ENCODE measurements at regions of chr9 and their contacts with region 1.

Region 1: DNA sequence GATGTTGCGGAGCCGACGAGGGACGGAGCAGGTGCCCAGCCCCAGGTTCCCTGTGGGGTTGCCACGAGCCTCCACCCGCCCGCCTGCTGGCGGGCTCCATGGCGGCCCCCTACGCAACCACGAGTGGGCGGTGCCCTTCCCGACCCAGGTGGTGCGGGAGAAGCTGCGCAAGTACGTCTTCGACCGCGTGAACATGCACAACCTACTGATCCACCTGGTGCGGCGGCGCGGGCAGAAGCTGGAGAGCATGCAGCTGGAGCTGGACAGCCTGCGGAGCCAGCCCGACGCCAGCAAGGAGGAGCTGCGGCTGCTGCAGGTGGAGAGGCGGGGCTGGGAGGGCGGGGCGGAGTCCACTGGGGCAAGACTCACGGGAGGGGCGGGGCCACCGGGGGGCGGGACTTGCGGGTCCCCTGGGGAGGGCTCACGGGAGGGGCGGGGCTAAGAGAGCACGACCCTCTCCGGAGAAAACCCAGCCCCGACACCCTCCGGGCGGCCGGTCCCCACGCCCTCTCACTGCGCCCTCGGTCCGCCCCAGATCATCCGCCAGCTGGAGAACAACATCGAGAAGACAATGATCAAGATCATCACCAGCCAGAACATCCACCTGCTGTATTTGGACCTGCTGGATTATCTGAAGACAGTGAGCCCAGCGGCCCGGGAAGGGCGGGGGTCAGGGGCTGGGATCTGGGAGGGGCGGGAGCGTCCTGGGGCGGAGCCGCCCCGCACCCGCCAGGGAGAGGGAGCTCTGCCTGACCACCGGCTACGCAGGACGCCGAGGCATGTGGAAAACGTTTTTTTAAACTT is 3.9 kb downstream of the CCDC183 start:
- DNase-seq: peak; percentile 70 to 91
- H3K4me3 ChIP-seq: peak overlapping the region; percentile 52 to 76 (median 64)
- H3K27ac ChIP-seq: no peak overlapping the region
- H3K4me1 ChIP-seq: peaks cover 0 to 17% (median 10%) of the 10 kb centered on the region in 4 experiments; a peak in 6 of 7 replicates
- H3K27me3 ChIP-seq: peaks cover 0 to 26% (median 13%) of the 10 kb centered on the region in 4 experiments; a peak in 5 of 7 replicates
- CTCF ChIP-seq: no peak
- EP300 ChIP-seq: no peak
- POLR2A ChIP-seq: peak in 1 of 2 experiments; percentile 28; a peak in 1 of 3 replicates
- RAD21 ChIP-seq: no peak

Region 2: DNA sequence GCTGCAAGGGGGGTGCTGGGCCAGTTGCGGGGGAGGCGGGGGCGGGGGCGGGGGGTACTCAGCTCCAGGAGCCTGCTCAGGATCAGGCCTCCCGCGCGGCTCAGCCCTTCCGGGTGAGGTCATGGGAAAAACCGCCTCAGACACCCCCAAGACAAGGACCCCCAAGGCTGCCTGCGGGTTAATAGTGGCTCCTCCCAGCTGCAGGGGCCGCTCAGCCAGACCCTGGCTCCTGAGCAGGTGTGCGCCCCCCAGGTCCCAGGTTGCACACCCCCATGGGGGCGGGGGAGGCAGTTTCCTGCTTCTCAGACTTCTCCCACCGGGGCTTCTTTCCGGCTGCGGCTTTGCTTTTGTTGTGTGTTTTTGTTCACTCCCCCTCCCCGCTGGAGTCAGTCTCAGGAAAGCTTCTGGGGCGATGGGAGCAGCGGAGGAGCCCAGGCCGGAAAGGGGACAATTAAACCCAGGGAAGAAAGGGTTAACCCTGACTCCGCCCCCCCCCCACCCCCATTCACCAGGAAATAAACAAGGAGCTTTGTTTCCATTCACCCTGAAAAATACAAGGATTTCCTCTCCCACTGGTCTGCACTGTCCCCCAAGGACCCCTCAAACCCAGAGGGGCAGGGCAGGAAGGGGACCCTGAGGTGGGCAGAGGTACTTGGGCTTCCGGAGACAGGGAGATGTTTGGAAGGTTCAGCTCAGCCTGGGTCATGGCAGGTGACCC is 212.0 kb before region 1 on chr9:
- CTCF ChIA-PET with region 1: no interaction called
- POLR2A ChIA-PET with region 1: no interaction called
- DNase-seq: peak; percentile 84 to 91
- H3K4me3 ChIP-seq: peak overlapping the region in 3 of 4 experiments; percentile 12 to 53 (median 36); a peak in 6 of 8 replicates
- H3K27ac ChIP-seq: peak overlapping the region; percentile 90
- H3K4me1 ChIP-seq: peaks cover 3 to 50% (median 36%) of the 10 kb centered on the region in 4 experiments
- H3K27me3 ChIP-seq: no peaks in the 10 kb centered on the region
- CTCF ChIP-seq: no peak
- EP300 ChIP-seq: peak in 1 of 2 experiments; percentile 78; a peak in 1 of 3 replicates
- POLR2A ChIP-seq: no peak
- RAD21 ChIP-seq: peak in 1 of 2 experiments; percentile 18; a peak in 1 of 4 replicates

Region 3: DNA sequence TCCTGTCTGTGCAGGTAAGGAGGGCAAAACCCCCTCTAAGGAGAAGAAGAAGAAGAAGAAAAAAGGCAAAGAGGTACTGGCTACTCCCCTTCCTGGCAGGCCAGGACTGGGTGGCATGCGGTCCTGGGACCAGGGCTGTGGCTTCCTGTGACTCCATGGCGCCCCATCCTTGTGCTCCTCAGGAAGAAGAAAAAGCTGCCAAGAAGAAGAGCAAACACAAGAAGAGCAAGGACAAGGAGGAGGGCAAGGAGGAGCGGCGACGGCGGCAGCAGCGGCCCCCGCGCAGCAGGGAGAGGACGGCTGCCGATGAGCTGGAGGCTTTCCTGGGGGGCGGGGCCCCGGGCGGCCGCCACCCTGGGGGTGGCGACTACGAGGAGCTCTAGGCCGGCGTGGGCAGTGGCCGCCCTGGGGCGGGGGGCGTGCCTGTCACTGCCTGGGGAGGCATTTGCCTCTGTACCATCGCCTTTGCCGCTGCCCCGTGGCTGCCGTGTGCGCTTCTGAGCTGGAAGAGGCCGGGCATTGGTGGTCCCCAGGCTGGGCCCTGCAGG is 40.2 kb after region 1 on chr9:
- CTCF ChIA-PET with region 1: interaction called, 35 read pairs
- POLR2A ChIA-PET with region 1: interaction called, 8 read pairs
- DNase-seq: no peak
- H3K4me3 ChIP-seq: no peak overlapping the region
- H3K27ac ChIP-seq: no peak overlapping the region
- H3K4me1 ChIP-seq: peaks cover 5 to 24% (median 16%) of the 10 kb centered on the region in 4 experiments
- H3K27me3 ChIP-seq: no peaks in the 10 kb centered on the region
- CTCF ChIP-seq: no peak
- EP300 ChIP-seq: no peak
- POLR2A ChIP-seq: no peak; a peak in 1 of 3 replicates
- RAD21 ChIP-seq: no peak